Activated CD4-positive, alpha-beta T cell treated with anti-CD3 and anti-CD28 coated beads, Interleukin-2, amount 10 ng/mL, durations not matched to agents 7 days and 5 days (primary cell): ENCODE measurements at regions of chr1 and their contacts with region 1.

Region 1: DNA sequence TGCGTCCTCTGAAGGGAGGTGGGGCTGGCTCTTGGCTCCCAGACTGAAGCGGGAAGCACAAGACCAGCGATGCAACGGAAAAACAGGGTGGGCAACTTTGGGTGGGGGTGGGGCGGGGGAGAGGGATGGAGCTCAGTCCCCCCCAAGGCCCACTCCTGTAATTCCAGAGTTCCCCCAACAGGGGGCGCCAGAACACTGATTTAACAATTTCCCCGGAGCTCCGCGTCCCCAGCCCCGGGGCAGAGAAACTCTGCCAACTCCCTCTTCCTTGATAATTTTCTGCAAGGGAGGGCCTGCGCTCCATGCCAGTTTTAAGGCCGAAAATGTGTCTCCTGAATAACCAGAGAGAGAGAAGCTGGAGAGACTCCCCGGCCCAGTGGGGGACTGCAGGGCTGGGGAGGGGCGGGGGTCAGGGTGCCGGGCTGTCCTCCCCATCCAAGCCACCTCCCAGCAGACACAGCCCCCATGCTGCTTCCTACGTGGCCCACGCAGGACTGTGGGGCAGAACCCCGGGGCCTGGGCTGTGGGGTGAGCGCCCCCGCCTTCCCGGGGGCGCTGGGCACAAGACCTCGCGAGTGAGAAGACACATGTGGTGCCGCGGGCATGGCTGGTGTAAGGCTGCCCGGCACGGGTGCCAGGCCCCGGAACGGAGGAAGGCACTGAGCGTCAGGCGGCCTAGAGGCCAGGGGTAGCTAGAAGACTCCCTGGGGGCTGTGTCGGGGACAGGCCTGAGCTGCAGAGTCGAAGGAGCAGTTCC is 51.4 kb downstream of the KIF21B start:
- DNase-seq: peak; percentile 68
- H3K4me3 Mint-ChIP-seq: no peak overlapping the region
- H3K27ac Mint-ChIP-seq: no peak overlapping the region
- H3K4me1 Mint-ChIP-seq: no peaks in the 10 kb centered on the region
- H3K27me3 Mint-ChIP-seq: no peaks in the 10 kb centered on the region

Region 2: GRCh38 chr1:201050515-201051277 is 78.6 kb after region 1 on chr1:
- CTCF ChIA-PET with region 1: interaction called, 11 read pairs
- POLR2A ChIA-PET with region 1: no interaction called
- DNase-seq: no peak
- H3K4me3 Mint-ChIP-seq: no peak overlapping the region
- H3K27ac Mint-ChIP-seq: no peak overlapping the region
- H3K4me1 Mint-ChIP-seq: peaks cover 2% of the 10 kb centered on the region
- H3K27me3 Mint-ChIP-seq: peaks cover 6% of the 10 kb centered on the region

Region 3: DNA sequence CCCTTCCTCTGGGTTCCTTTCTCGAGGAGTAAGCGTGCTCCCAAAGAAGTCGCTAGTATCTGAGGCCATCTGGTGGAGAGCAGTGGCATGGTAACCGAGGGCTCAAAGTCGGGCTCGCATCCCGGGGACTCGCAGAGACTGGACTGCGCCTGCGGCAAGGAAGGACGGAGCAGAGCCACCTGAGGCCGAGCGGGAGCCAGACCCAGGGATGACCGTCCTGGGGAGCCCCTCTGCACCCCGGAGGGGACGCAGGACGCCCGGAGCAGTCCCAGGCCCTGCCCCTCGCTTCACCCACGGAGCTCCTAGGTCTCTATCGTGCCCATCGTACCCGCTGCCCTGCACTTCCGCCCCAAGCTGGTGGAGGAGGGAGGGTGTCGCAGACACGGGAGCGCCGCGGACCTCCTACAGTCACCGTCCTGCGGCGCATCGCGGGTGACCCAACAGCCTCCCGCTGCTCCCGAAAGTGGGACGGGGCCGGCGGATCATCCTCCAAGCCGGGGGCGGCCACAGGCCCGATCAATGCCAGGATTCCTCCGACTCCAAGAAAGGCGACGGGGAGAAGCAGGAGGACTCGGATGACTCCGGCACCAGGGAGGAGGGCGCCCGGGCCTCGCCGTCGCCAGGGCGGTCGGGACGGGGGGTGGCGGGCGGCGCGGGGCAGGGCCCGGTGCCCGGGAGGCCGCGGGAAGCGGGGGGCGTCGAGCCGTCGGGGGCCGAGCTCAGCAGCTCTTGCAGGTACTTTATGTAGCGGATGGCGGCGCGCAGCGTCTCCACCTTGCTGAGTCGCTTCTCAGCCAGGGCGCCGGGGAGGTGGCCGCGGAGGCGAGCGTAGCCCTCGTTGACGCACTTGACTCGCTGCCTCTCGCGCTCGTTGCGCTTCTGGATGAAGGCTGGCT is 142.4 kb after region 1 on chr1:
- CTCF ChIA-PET with region 1: interaction called, 13 read pairs
- POLR2A ChIA-PET with region 1: no interaction called
- DNase-seq: peak; percentile 73
- H3K4me3 Mint-ChIP-seq: peak overlapping the region; percentile 72
- H3K27ac Mint-ChIP-seq: peak overlapping the region; percentile 36
- H3K4me1 Mint-ChIP-seq: peaks cover 5% of the 10 kb centered on the region
- H3K27me3 Mint-ChIP-seq: peaks cover 24% of the 10 kb centered on the region